GM12878 (cell line): ENCODE measurements at regions of chr6 and their contacts with region 1.

Region 1: DNA sequence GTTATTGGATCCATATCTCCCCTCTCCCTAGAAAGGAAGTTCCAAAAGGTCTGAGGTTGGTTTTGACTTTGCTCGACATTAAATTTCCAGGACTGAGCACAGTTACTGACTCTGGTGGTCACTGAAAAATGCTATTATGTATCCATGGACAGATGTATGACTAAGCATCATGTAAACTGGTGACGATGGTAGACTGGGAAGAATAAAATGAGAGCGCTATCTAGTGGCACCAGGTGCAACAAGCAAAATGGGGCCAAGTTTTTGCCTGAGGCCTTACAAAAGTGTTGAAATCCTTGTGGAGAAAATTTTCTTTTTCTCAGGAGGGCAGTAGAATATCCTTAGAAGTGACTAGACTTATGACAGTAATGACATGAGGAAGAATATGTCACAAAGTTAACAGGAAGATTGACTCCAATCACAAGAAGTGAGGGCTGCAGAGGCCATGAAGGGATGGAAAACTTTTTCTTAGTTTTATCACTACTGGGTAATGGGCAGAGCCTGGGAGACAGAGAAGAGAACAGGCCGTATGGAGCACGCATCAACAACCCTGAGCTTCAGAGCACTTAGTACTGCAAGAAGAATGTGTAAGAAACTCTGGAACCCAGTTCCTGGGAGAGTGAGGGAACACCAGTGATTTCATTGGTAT is 88.9 kb upstream of the ELOVL5 start:
- DNase-seq: peak; percentile 27
- ATAC-seq: peak; percentile 69
- H3K4me3 ChIP-seq: no peak overlapping the region
- H3K27ac ChIP-seq: no peak overlapping the region
- H3K4me1 ChIP-seq: peaks cover 4% of the 10 kb centered on the region; the same call in 1 of the 2 replicates
- H3K27me3 ChIP-seq: peaks cover 0 to 5% of the 10 kb centered on the region in 2 experiments; a peak in 1 of 4 replicates
- CTCF ChIP-seq: peak; percentile 64 to 77 (median 67)
- EP300 ChIP-seq: no peak
- POLR2A ChIP-seq: no peak
- RAD21 ChIP-seq: peak; percentile 90

Region 2: DNA sequence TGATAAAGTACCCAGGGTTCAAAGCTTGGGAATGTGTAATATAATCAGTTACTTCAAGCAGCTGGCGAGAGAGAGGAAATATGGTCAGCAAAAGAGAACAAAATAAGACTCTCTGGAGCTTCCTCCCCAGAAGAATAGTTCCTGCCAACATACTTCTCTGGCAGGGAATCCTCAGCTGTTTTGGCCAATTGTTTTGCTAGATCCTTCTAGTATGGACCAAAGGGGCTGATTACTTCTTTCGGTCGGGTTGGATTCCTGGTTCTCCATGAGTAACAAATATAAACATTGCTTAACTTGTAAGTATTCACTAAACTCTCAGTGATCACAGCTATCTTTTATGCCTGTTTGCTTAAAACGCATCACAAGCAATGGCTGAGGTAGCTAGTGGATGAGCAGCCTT is 403.9 kb before region 1 on chr6:
- CTCF ChIA-PET with region 1: no interaction called
- POLR2A ChIA-PET with region 1: no interaction called
- RAD21 ChIA-PET with region 1: no interaction called
- SMC1A ChIA-PET with region 1: no interaction called
- in situ Hi-C with region 1: no loop called
- intact Hi-C with region 1: no loop called
- DNase-seq: no peak
- ATAC-seq: no peak
- H3K4me3 ChIP-seq: no peak overlapping the region
- H3K27ac ChIP-seq: no peak overlapping the region
- H3K4me1 ChIP-seq: no peaks in the 10 kb centered on the region
- H3K27me3 ChIP-seq: no peaks in the 10 kb centered on the region
- CTCF ChIP-seq: no peak
- EP300 ChIP-seq: no peak
- POLR2A ChIP-seq: no peak
- RAD21 ChIP-seq: no peak

Region 3: GRCh38 chr6:53179961-53180651 is 257.6 kb before region 1 on chr6:
- CTCF ChIA-PET with region 1: interaction called, 225 read pairs
- POLR2A ChIA-PET with region 1: interaction called, 3 read pairs
- RAD21 ChIA-PET with region 1: interaction called, 78 read pairs
- SMC1A ChIA-PET with region 1: interaction called, 10 read pairs
- in situ Hi-C with region 1: no loop called
- intact Hi-C with region 1: no loop called
- DNase-seq: no peak
- ATAC-seq: peak; percentile 70
- H3K4me3 ChIP-seq: no peak overlapping the region
- H3K27ac ChIP-seq: no peak overlapping the region
- H3K4me1 ChIP-seq: no peaks in the 10 kb centered on the region
- H3K27me3 ChIP-seq: no peaks in the 10 kb centered on the region
- CTCF ChIP-seq: no peak
- EP300 ChIP-seq: no peak
- POLR2A ChIP-seq: no peak
- RAD21 ChIP-seq: no peak

Region 4: GRCh38 chr6:53284901-53285300 is 152.8 kb before region 1 on chr6:
- CTCF ChIA-PET with region 1: interaction called, 8 read pairs
- POLR2A ChIA-PET with region 1: no interaction called
- RAD21 ChIA-PET with region 1: interaction called, 9 read pairs
- SMC1A ChIA-PET with region 1: interaction called, 18 read pairs
- in situ Hi-C with region 1: no loop called
- intact Hi-C with region 1: loop called (anchors 5 kb)
- DNase-seq: no peak
- ATAC-seq: peak; percentile 76
- H3K4me3 ChIP-seq: no peak overlapping the region
- H3K27ac ChIP-seq: no peak overlapping the region
- H3K4me1 ChIP-seq: peaks cover 28% of the 10 kb centered on the region
- H3K27me3 ChIP-seq: no peaks in the 10 kb centered on the region
- CTCF ChIP-seq: no peak
- EP300 ChIP-seq: peak in 1 of 2 experiments; percentile 33; a peak in 1 of 4 replicates
- POLR2A ChIP-seq: no peak
- RAD21 ChIP-seq: no peak

Region 5: DNA sequence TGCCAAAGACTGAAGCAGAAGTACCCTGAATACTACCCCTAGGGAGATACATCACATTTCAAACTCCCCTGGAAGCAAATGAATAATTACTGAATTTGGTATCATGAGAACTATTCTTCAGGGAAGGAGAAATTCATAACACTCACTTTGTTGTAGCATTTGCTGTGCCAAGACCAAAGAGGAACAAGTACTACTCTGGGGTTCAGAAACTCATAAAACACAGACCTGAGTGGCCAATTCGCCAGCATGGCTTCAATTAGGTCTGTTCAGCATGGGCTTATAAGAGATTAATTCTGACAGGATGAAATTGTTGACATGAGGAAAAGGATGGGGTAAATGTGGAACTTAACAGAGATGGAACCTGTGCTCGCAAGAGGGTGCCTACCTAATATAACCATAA is 95.5 kb before region 1 on chr6:
- CTCF ChIA-PET with region 1: interaction called, 31 read pairs
- POLR2A ChIA-PET with region 1: interaction called, 3 read pairs
- RAD21 ChIA-PET with region 1: interaction called, 18 read pairs
- SMC1A ChIA-PET with region 1: interaction called, 15 read pairs
- in situ Hi-C with region 1: no loop called
- intact Hi-C with region 1: loop called (anchors 2 kb)
- DNase-seq: no peak
- ATAC-seq: peak; percentile 28
- H3K4me3 ChIP-seq: peak overlapping the region; percentile 5; the same call in 1 of the 2 replicates
- H3K27ac ChIP-seq: no peak overlapping the region
- H3K4me1 ChIP-seq: peaks cover 23% of the 10 kb centered on the region
- H3K27me3 ChIP-seq: no peaks in the 10 kb centered on the region
- CTCF ChIP-seq: no peak
- EP300 ChIP-seq: no peak
- POLR2A ChIP-seq: no peak
- RAD21 ChIP-seq: no peak

Region 6: GRCh38 chr6:53359072-53359842 is 78.4 kb before region 1 on chr6:
- CTCF ChIA-PET with region 1: interaction called, 5 read pairs
- POLR2A ChIA-PET with region 1: interaction called, 4 read pairs
- RAD21 ChIA-PET with region 1: interaction called, 11 read pairs
- SMC1A ChIA-PET with region 1: interaction called, 8 read pairs
- in situ Hi-C with region 1: no loop called
- intact Hi-C with region 1: loop called (anchors 2 kb)
- DNase-seq: peak; percentile 78
- ATAC-seq: peak; percentile 95
- H3K4me3 ChIP-seq: peak overlapping the region; percentile 76
- H3K27ac ChIP-seq: peak overlapping the region; percentile 86
- H3K4me1 ChIP-seq: peaks cover 17% of the 10 kb centered on the region
- H3K27me3 ChIP-seq: no peaks in the 10 kb centered on the region
- CTCF ChIP-seq: no peak
- EP300 ChIP-seq: 0 out of 4 replicates have a peak, but pooled peaks of 1 of the 2 experiments have one; percentile 8
- POLR2A ChIP-seq: peak; percentile 94
- RAD21 ChIP-seq: no peak

Region 7: GRCh38 chr6:54130179-54130578 is 692.5 kb after region 1 on chr6:
- CTCF ChIA-PET with region 1: no interaction called
- POLR2A ChIA-PET with region 1: no interaction called
- RAD21 ChIA-PET with region 1: no interaction called
- SMC1A ChIA-PET with region 1: no interaction called
- in situ Hi-C with region 1: no loop called
- intact Hi-C with region 1: no loop called
- DNase-seq: no peak
- ATAC-seq: no peak
- H3K4me3 ChIP-seq: no peak overlapping the region
- H3K27ac ChIP-seq: no peak overlapping the region
- H3K4me1 ChIP-seq: no peaks in the 10 kb centered on the region
- H3K27me3 ChIP-seq: no peaks in the 10 kb centered on the region
- CTCF ChIP-seq: no peak
- EP300 ChIP-seq: no peak
- POLR2A ChIP-seq: no peak
- RAD21 ChIP-seq: no peak